WTC11 (cell line): ENCODE measurements at regions of chr4 and their contacts with region 1.

Region 1: DNA sequence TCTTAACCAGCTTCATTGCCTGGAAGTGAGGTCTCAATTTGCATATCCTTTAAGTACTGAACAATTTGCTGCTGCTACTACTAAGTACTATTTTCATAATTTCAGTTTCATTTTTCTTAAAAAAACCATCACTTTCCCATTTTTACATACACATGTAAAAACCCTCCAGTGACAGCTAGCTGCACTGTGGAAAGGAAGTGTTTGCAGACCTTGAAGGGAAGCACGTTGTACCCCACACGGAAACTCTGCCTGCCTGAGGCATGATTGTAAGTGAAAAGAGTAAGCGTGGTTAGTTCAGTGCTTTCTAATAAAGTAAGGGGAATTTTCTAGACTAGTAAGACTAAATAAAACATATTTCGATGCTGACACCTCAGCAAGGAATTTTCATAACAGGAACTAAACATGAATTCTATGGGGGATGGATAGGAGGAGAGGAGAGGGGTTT is 103.6 kb downstream of the RAPGEF2 start:
- DNase-seq: no peak
- ATAC-seq: no peak
- H3K4me3 Mint-ChIP-seq: no peak overlapping the region
- H3K27ac Mint-ChIP-seq: peak overlapping the region; percentile 10; the same call in 1 of the 2 replicates
- H3K4me1 Mint-ChIP-seq: peaks cover 52% of the 10 kb centered on the region
- H3K27me3 Mint-ChIP-seq: no peaks in the 10 kb centered on the region
- CTCF ChIP-seq: no peak

Region 2: DNA sequence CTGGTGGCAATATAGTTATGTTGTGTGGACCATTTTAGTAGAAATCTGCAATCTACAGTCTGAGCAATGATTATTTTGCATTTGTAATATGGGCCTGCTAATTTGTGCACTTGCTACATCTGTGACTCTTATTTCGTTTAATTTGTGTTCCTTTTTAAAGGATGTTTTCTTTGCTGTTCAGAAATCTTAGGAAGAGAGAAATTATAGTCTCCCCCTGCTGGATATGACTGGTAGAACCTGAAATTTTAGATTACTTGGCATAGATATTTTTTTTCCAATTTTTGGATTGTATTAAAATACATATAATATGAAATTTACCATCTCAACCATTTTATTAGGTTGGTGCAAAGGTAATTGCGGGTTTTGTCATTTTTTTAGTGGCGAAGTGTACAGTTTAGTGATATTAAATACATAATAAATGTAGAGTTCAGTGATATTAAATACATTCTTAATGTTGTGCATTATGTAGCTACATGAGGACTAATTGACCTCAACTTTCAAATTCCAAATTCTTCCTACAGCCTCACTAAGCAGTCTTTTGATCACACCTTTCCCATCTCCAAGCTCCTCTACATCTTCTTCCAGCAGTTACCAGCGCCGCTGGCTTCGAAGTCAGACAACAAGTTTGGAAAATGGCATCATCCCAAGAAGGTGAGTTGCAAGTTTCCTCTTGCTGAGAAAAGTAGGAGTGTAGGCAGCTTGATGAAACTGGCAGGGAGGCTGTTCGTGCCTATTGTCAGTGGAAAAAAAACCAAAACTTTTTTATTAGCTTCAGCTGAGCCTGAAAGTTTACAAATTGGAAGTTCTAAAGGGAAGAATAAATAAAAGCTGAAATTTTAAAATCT is 355.4 kb before region 1 on chr4:
- CTCF ChIA-PET with region 1: interaction called, 10 read pairs
- POLR2A ChIA-PET with region 1: no interaction called
- DNase-seq: no peak
- ATAC-seq: no peak
- H3K4me3 Mint-ChIP-seq: no peak overlapping the region
- H3K27ac Mint-ChIP-seq: no peak overlapping the region
- H3K4me1 Mint-ChIP-seq: peaks cover 18% of the 10 kb centered on the region
- H3K27me3 Mint-ChIP-seq: no peaks in the 10 kb centered on the region
- CTCF ChIP-seq: peak; percentile 42

Region 3: GRCh38 chr4:159191989-159192388 is 14.5 kb before region 1 on chr4:
- CTCF ChIA-PET with region 1: interaction called, 20 read pairs
- POLR2A ChIA-PET with region 1: no interaction called
- DNase-seq: no peak
- ATAC-seq: peak; percentile 94
- H3K4me3 Mint-ChIP-seq: no peak overlapping the region
- H3K27ac Mint-ChIP-seq: no peak overlapping the region
- H3K4me1 Mint-ChIP-seq: peaks cover 9% of the 10 kb centered on the region
- H3K27me3 Mint-ChIP-seq: no peaks in the 10 kb centered on the region
- CTCF ChIP-seq: 0 out of 2 replicates have a peak, but pooled peaks have one; percentile 30